Activated B cell treated with CpG ODN at 0.5 μM for 24 hours (primary cell): ENCODE measurements at regions of chr5 and their contacts with region 1.

Region 1: DNA sequence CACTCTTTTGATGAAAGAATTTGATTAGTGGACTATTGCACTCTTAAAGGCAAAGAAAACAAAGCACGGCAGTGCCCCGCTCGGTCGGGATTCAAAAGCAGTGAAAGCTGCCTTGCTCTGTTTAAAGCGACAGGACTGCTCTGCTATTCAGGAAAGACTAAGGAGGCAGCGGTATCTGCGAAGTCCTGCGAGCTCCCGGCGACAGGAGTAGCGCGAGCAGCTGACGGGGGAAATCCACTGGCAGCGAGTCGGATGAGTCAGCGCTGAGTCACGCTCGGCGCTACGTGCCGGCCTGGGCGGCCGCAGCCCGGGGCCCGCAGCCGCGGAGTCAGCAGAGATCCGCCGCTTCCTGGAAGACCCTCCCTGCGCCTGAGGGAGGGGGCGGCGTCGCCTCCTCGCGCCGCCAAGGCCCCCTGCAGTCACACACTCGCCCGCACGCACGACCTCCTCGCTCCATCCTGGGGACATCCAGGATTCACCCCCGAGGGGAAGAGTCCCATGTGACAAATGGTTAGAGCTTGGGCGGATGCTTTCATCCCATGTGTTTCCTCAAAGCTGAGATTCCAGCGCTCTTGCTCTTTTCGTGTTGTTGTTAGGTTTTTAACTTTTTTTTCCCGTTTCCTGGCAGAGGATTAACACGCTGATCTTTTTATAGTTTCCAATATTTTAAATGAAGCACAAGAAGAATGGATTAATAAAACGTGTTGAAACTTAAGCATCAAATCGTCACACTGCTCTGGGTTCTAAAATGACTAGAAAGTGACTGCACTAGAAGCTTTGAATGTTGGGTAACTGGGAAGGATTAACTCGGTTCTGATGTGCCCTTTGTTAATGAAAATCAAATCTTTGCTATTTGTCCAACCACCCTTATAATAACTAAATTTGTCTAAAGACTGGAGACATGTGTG is 102.5 kb downstream of the ARRDC3 start:
- DNase-seq: peak; percentile 80
- ATAC-seq: peak; percentile 88
- H3K4me3 Mint-ChIP-seq: peak overlapping the region; percentile 81
- H3K27ac Mint-ChIP-seq: peak overlapping the region; percentile 81
- H3K4me1 Mint-ChIP-seq: peaks cover 21% of the 10 kb centered on the region
- H3K27me3 Mint-ChIP-seq: peaks cover 8% of the 10 kb centered on the region
- CTCF ChIP-seq: no peak

Region 2: DNA sequence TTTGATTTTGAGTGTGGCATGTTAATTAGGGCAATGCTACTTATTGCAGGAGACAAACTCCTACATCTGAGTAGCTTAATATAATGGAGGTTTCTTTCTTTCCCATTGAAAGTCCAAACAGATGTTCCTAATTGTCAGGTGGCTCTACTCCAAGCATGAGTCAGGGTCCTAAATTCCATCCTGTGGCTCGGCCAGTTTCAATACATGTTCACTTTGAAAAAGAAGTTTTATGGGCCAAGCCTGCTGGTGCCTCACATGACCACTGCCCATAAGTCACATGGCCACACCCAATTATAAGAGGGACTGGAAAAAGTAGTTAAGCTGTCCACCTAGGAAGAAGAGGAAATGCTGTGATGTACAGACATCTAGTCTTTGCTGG is 67.9 kb before region 1 on chr5:
- CTCF ChIA-PET with region 1: no interaction called
- POLR2A ChIA-PET with region 1: interaction called, 10 read pairs
- intact Hi-C with region 1: no loop called
- DNase-seq: no peak
- ATAC-seq: no peak
- H3K4me3 Mint-ChIP-seq: no peak overlapping the region
- H3K27ac Mint-ChIP-seq: no peak overlapping the region
- H3K4me1 Mint-ChIP-seq: no peaks in the 10 kb centered on the region
- H3K27me3 Mint-ChIP-seq: peaks cover 7% of the 10 kb centered on the region
- CTCF ChIP-seq: no peak

Region 3: DNA sequence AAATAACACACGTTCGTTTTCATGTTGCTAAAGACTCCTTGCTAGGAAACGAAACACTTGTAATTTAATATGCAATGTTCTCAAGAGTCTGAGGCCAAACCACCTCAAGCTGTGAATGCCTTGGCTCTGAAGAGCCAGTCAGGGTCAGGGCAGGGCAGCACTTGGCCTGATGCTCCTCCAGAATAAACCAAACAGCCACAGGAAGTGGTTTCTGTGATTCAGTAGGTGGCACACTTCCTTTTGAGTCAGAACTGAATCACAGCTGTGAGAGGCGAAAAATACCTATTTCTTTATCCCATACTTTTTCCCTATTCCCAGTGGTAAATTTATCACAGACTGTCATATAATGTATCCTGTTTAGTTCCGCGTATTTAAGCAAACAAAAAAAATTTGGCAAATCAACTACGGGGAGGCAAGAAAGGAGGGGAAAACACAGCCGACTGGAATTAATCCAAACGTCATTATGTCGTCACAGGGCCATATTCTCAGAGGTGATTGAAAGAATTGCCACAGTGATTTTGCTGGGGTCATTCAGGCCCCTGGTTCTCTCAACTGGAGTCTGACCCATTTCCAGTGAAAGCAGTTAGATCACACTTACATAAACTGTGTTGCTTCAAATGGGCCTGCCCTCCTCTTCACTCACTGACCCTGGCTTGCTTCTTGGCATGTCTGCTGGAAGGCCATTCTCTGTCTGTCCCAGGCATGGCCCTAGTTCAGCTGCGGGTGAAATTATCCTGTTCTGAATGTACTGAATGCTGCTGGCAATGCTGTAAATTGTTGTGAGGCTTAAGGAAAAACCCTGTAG is 31.3 kb after region 1 on chr5:
- CTCF ChIA-PET with region 1: interaction called, 4 read pairs
- POLR2A ChIA-PET with region 1: interaction called, 36 read pairs
- intact Hi-C with region 1: loop called (anchors 1 kb)
- DNase-seq: no peak
- ATAC-seq: peak; percentile 84
- H3K4me3 Mint-ChIP-seq: peak overlapping the region; percentile 70
- H3K27ac Mint-ChIP-seq: peak overlapping the region; percentile 88
- H3K4me1 Mint-ChIP-seq: peaks cover 53% of the 10 kb centered on the region
- H3K27me3 Mint-ChIP-seq: no peaks in the 10 kb centered on the region
- CTCF ChIP-seq: no peak

Region 4: DNA sequence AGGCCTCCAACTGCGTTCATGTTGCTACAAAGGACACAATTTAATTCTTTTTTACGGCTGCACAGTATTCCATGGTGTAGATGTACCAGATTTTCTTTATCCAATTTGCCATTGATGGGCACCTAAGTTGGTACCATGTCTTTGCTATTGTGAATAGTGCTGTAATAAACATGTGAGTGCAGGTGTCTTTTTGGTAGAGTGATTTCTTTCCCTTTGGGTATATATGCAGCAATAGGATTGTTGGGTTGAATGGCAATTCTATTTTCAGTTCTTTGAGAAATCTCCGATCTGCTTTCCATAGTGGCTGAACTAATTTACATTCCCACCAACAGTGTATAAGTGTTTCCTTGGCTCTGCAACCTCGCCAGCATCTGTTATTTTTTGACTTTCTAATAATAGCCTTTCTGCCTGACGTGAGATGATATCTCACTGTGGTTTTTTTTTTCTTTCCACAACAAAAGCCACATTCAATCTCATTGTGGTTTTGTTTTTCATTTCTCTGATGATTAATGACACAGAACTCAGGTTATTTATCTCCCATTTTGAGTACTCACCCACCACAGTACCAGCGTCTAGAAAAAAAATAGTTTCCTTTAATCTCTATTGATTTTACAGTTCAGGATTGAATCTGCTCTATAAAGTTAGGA is 80.6 kb after region 1 on chr5:
- CTCF ChIA-PET with region 1: no interaction called
- POLR2A ChIA-PET with region 1: interaction called, 9 read pairs
- intact Hi-C with region 1: loop called (anchors 2 kb)
- DNase-seq: no peak
- ATAC-seq: peak; percentile 47
- H3K4me3 Mint-ChIP-seq: peak overlapping the region; percentile 17
- H3K27ac Mint-ChIP-seq: peak overlapping the region; percentile 57
- H3K4me1 Mint-ChIP-seq: peaks cover 21% of the 10 kb centered on the region
- H3K27me3 Mint-ChIP-seq: no peaks in the 10 kb centered on the region
- CTCF ChIP-seq: no peak

Region 5: DNA sequence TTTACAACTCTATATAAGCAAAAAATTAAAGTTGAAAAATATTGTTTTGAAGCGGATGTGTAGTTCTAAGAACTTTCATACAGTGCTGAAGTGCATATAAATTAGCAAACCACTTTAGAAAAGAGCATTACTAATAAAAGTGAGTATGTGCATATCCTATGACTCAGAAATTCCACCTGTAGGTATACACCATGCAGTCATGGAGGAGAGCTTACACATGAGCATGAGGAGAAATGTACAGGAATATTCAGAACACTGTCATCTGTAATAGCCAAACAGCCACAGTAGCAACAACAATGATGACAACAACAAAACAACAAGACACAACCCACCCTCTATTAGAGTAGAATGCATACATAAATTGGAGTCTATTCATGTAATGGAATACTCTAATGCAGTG is 240.7 kb after region 1 on chr5:
- CTCF ChIA-PET with region 1: no interaction called
- POLR2A ChIA-PET with region 1: no interaction called
- intact Hi-C with region 1: no loop called
- DNase-seq: no peak
- ATAC-seq: no peak
- H3K4me3 Mint-ChIP-seq: no peak overlapping the region
- H3K27ac Mint-ChIP-seq: no peak overlapping the region
- H3K4me1 Mint-ChIP-seq: no peaks in the 10 kb centered on the region
- H3K27me3 Mint-ChIP-seq: no peaks in the 10 kb centered on the region
- CTCF ChIP-seq: no peak